ENCODE measurements at regions of chr12 and their contacts with region 1.

Region 1: GRCh38 chr12:132489602-132490239 is at the start of gene FBRSL1:
- DNase-seq: peak; percentile 75 to 98 (median 88)

Region 2: DNA sequence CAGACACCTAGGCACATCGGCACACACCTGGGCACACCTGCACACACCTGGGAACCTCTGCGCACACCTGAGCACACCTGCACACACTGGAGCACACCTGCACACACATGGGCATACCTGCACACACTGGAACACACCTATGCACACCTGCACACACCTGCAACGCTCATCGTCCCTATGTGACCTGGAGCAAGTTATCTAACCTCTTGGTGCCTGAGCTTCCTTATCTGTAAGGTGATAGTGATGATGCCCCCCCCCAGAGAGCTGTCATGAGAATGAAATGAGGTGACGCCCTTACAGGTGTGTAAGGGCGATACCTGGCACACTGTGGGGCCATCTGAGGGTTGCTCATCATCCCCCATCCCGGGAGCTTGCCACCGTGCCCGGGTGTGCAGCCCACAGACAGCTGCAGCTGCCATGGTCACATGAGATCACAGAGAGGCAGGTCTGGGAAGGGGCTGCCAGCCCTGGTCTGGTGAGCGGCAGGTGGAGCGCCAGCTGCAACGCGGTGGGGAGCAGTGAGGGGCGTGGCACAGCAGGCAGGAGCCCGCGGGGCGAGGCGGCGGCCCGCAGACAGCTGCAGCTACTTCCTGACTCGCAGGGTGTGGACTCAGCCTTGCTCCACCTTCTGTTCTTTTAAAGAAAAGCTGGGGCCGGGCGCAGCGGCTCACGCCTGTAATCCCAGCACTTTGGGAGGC is 59.6 kb before region 1 on chr12:
- intact Hi-C with region 1: no loop called
- DNase-seq: no peak

Region 3: GRCh38 chr12:132523576-132524331 is 34.0 kb after region 1 on chr12:
- intact Hi-C with region 1: loop called (anchors 5 kb)
- DNase-seq: peak; percentile 67 to 96 (median 84)